ENCODE measurements at regions of chr7 and their contacts with region 1.

Region 1: DNA sequence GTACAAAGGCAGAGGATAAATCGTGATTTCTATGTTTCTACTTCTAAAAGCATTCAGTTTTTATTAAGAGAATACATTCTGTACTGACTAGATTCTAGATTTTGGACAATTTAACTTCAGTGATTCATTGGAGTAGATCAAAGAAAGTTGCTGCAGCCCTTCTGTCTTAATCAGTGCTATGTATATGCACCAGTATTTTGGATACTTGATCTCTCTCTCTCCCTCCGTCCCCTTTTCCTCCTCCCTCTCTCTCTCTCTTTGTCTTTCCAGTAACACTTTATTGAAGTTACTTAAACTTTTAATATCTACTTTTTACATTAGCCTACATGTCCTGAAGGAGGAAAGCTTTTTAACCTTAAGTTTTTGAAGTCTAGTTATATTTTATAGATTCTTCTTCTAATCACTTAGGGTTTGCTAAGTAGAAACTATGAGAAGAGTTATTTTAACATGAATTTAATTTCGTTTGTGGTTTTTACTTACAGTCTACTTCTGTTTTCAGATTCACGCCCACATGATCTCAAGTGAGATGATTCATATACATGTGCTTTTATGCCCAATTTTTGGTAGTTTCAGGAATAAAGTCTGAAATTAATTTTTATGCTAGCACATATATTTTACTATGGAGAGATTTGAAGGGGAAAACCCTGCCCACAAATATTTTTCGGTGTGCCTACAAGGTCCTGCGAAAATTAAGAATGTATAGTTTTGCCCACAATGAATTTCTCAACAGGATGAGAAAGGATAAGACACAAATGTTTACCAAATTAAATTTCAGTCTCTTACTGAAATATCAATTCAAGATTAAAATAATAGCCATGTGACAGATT is 9.1 kb downstream of the MDFIC start:
- DNase-seq: no peak
- H3K4me3 Mint-ChIP-seq: no peak overlapping the region
- H3K27ac Mint-ChIP-seq: no peak overlapping the region
- H3K4me1 Mint-ChIP-seq: peaks cover 44% of the 10 kb centered on the region
- H3K27me3 Mint-ChIP-seq: no peaks in the 10 kb centered on the region

Region 2: DNA sequence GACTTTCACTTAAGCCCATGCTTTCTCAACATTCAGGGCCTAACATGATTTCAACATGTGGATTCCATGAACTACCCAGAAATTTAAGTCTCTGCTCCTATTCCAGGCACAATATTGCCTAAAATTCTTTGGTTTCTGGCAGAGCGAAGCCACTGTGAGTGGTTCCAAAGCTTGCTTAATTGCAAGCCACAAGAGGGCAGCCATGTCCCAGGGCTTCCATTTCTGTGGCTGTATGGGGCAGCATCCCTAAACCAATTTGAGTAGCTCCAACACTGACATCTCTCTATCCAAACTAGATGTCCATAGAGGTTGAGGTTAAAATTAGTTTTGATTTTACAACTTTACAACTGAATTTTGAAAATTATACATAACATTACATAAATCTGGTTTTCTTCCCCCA is 65.5 kb before region 1 on chr7:
- intact Hi-C with region 1: loop called (anchors 5 kb)
- DNase-seq: peak; percentile 85
- H3K4me3 Mint-ChIP-seq: no peak overlapping the region
- H3K27ac Mint-ChIP-seq: no peak overlapping the region
- H3K4me1 Mint-ChIP-seq: peaks cover 11% of the 10 kb centered on the region
- H3K27me3 Mint-ChIP-seq: no peaks in the 10 kb centered on the region

Region 3: GRCh38 chr7:114916261-114916892 is 14.7 kb before region 1 on chr7:
- intact Hi-C with region 1: loop called (anchors 2 kb)
- DNase-seq: peak; percentile 72
- H3K4me3 Mint-ChIP-seq: peak overlapping the region; percentile 62
- H3K27ac Mint-ChIP-seq: peak overlapping the region; percentile 99
- H3K4me1 Mint-ChIP-seq: peaks cover 49% of the 10 kb centered on the region
- H3K27me3 Mint-ChIP-seq: no peaks in the 10 kb centered on the region

Region 4: DNA sequence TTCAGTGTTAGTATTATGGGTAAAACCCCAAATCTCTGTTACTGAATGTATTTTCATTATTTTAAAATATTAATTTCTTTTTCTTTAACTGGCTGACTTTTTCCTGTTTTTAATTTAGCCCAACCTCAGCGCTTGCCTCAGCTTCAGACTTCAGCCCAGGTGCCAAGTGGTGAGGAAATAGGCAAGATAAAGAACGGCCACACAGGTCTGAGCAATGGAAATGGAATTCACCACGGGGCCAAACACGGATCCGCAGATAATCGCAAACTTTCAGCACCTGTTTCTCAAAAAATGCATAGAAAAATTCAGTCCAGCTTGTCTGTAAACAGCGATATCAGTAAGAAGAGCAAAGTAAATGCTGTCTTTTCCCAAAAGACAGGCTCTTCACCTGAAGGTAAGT is 48.3 kb after region 1 on chr7:
- intact Hi-C with region 1: loop called (anchors 5 kb)
- DNase-seq: no peak
- H3K4me3 Mint-ChIP-seq: no peak overlapping the region
- H3K27ac Mint-ChIP-seq: no peak overlapping the region
- H3K4me1 Mint-ChIP-seq: peaks cover 36% of the 10 kb centered on the region
- H3K27me3 Mint-ChIP-seq: no peaks in the 10 kb centered on the region

Region 5: DNA sequence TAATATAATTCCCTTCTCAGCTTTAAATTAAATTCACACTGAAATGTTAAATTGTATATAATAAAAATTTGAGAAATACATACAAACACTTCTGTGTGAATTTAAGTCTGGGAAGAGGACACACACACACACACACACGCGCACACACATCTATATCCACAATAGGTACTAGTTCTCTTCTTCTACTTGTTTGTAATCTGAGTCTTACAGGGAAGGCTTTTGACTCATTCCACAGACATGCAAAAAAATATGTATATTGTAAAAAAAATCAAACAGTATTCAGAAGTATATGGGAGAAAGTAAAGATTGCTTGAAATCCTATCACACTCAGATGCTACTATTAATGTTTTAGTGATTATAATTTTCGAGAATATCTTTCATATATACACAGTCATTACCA is 267.1 kb after region 1 on chr7:
- intact Hi-C with region 1: no loop called
- DNase-seq: no peak
- H3K4me3 Mint-ChIP-seq: no peak overlapping the region
- H3K27ac Mint-ChIP-seq: no peak overlapping the region
- H3K4me1 Mint-ChIP-seq: no peaks in the 10 kb centered on the region
- H3K27me3 Mint-ChIP-seq: no peaks in the 10 kb centered on the region